SK-N-SH (cell line): ENCODE measurements at regions of chr19 and their contacts with region 1.

Region 1: DNA sequence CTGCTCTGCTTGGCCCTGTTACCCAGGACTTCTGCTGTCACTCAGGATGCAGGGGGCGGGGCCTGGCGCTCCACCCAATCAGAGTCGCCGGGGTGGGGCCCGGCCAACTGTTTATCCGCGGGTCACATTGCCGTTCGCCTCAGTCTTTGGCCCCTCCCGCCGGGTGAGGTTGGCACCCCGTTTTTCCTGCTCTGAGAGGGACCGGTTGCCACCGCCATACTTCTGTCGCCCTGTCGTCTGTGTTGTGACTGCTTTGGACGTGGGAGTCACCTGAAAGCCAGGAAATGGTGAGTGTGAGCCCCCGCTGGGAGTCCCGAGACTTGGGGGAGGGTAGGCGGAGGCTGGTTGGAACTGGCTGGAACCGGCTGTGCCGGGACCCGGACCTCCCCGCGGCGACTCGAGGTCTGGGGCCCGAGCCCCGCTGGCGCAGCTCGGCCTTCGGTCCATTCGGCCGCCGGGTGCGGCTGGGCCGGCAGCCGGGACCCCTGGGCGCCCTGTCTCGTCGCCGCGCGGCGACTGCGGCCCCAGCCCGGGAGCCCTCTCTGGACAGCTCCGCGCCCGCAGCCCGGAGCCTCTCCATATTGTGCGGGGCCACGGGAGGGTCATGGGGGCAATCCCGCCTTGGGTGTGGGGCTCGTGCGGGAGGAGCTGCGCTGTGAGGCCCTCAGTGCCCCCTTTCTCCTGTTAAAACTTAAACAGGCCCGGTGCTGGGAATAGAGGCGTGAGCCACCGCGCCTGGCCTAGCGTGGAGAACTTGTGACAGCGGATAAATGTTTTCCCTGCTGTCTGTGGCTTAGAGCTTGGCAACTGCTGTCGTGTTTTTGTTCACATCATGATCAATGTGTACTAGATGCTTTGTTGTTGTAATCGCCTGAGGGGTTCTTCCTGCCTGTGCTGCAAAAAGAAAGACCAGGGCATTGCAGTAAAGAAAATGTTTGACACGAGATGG is at the start of gene ZNF844:
- DNase-seq: peak; percentile 97
- H3K4me3 ChIP-seq: peak within 1 kb of the TSS; percentile 55 to 69
- H3K27ac ChIP-seq: peak within 1 kb of the TSS in 1 of 2 experiments; percentile 67; a peak in 1 of 4 replicates
- H3K4me1 ChIP-seq: no peaks in the 10 kb centered on the region; a peak in 1 of 4 replicates
- H3K27me3 ChIP-seq: no peaks in the 10 kb centered on the region
- CTCF ChIP-seq: no peak
- EP300 ChIP-seq: no peak
- RAD21 ChIP-seq: no peak
- polyA plus RNA-seq, gene ZNF844: 0.28 and 0.31 TPM in 2 replicates

Region 2: DNA sequence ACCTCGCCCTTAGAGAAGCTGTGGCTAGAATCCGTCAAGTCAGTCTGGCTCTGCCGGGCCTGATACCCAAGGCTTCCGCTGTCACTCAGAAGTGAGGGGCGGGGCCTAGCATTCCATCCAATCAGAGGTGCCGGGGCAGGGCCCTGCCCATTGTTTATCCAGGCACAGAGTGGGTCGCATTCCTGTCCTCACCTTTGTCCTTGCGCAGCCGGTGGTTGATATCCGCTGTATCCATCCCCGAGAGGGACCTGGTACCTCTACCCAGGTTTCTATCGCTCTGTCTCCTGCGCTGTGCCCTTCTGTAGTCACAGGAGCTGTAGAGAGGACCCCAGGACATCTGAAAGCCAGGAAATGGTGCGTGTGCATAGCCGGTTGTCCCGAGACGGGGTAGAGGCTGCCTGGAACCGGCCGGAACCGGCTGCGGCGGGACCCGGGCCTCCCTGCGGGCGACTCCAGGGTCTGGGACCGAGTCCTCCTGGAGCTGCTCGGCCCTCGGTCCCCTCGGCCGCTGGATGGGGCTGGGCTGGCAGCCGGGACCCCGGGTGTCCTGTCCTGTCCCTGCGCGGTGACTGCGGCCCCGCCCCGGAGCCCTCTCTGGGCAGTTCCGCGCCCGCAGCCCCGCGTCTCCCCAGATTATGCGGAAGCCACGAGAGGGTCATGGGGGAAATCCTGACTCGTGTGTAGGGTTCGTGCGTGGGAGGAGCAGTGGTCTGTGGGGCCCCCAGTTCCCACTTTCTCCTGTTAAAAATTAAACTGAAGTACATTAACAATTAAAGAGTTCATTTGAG is 99.8 kb before region 1 on chr19 and contains the start of gene ZNF763:
- CTCF ChIA-PET with region 1: interaction called, 11 read pairs
- POLR2A ChIA-PET with region 1: no interaction called
- DNase-seq: peak; percentile 92
- H3K4me3 ChIP-seq: peak within 1 kb of the TSS; percentile 65
- H3K27ac ChIP-seq: peak within 1 kb of the TSS; percentile 30 to 72
- H3K4me1 ChIP-seq: peaks cover 0 to 7% of the 10 kb centered on the region in 2 experiments; a peak in 1 of 4 replicates
- H3K27me3 ChIP-seq: no peaks in the 10 kb centered on the region
- CTCF ChIP-seq: no peak
- EP300 ChIP-seq: no peak
- RAD21 ChIP-seq: no peak
- polyA plus RNA-seq, gene ZNF763: 0.55 and 0.72 TPM in 2 replicates

Region 3: DNA sequence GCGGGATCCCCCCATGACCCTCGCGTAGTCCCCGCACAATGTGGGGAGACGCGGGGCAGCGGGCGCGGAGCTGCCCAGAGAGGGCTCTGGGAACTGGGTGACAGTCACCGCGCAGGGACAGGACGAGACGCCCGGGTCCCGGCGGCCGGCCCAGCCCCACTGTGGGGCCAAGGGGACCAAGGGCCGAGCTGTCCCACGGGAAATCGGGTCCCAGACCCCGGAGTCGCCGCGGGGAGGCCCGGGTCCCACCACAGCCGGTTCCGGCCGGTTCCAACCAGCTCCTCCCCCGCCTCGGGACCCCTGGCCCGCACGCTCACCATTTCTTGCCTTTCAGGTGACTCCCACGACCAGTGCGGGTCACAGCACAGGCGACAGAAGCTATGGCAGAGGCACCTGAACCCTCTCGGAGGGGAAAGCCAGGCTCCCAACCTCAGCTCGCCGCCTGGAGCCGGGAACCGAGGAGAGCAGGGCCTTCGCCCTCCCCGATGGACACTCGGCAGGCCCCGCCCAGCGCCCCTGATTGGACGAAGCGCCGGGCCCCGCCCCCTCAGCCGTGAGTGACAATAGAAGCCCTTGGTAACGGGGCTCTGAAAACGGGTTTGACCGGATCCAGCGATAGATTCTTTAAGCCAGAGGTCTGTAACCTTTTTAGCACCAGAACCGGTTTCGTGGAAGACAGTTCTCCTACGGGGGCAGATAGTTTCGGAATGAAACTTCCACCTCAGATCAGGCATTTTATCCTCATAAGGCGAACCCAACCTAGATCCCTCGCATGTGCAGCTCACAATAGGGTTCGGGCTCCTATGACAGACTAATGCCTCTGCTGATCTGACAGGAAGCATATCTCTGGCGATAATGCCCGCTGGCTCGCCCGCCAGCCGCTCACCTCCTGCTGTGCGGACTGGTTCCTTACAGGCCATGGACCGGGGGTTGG is 29.4 kb before region 1 on chr19 and contains the start of gene ZNF433:
- CTCF ChIA-PET with region 1: interaction called, 19 read pairs
- POLR2A ChIA-PET with region 1: interaction called, 8 read pairs
- DNase-seq: peak; percentile 97
- H3K4me3 ChIP-seq: peak within 1 kb of the TSS; percentile 62 to 86
- H3K27ac ChIP-seq: peak within 1 kb of the TSS; percentile 44 to 56; a peak in 3 of 4 replicates
- H3K4me1 ChIP-seq: peaks cover 0 to 3% of the 10 kb centered on the region in 2 experiments; a peak in 1 of 4 replicates
- H3K27me3 ChIP-seq: no peaks in the 10 kb centered on the region
- CTCF ChIP-seq: no peak
- EP300 ChIP-seq: no peak
- RAD21 ChIP-seq: 0 out of 2 replicates have a peak, but pooled peaks have one; percentile 7
- polyA plus RNA-seq, gene ZNF433: 1.9 and 2.1 TPM in 2 replicates

Region 4: DNA sequence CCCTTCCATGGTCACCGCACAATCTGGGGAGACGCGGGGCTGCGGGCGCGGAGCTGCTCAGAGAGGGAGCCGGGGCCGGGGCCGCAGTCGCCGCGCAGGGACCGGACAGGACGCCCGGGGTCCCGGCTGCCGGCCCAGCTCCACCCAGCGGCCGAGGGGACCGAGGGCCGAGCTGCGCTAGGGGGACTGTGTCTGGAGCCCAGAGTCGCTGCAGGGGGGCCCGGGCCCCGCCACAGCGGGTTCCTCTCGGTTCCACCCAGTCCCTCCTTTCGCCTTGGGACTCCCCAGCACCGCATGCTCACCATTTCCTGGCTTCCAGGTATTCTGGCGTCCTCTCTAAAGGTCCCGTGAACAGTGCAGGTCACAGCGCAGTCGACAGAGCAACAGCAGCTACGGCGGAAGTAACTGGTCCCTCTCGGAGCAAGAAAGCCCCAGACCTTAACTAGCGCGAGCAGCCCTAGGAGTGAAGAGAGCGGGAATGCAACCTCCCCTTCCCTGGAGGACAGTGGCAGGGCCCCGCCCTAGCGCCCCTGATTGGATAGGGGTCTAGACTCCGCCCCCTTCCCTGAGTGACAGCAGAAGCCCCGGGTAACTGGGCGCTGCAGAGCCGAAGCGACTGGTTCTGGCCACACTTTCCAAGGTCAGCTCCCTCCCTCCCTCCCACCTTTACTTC is 12.2 kb before region 1 on chr19 and contains the start of gene ZNF878:
- CTCF ChIA-PET with region 1: interaction called, 18 read pairs
- POLR2A ChIA-PET with region 1: interaction called, 5 read pairs
- DNase-seq: peak; percentile 96
- H3K4me3 ChIP-seq: peak within 1 kb of the TSS; percentile 58 to 69
- H3K27ac ChIP-seq: peak within 1 kb of the TSS in 1 of 2 experiments; percentile 66; a peak in 2 of 4 replicates
- H3K4me1 ChIP-seq: no peaks in the 10 kb centered on the region; a peak in 1 of 4 replicates
- H3K27me3 ChIP-seq: no peaks in the 10 kb centered on the region
- CTCF ChIP-seq: peak; percentile 33
- EP300 ChIP-seq: no peak
- RAD21 ChIP-seq: no peak
- polyA plus RNA-seq, gene ZNF878: 0.05 TPM in 1 of 2 replicates, not detected in the other

Region 5: DNA sequence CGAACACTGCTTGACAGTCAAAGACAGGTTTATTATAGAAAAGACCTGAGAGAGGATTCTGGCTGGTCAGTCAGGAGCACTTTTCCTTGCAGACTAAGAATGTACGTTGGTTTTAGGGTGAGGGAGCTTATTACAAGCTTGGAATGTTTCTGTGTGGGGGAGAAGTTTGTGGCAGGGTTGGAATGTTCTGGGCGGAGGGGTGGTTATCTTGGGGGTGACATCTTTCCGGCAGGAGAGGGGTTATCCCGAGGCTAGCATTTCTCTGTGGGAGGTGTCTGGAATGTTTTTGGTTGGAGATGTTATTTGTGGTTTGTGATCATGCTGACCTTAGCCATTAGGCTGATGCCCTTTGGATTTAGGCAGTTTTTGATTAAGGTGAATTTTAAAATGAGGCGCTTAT is 159.8 kb after region 1 on chr19:
- CTCF ChIA-PET with region 1: no interaction called
- POLR2A ChIA-PET with region 1: no interaction called
- DNase-seq: no peak
- H3K4me3 ChIP-seq: no peak overlapping the region
- H3K27ac ChIP-seq: no peak overlapping the region
- H3K4me1 ChIP-seq: no peaks in the 10 kb centered on the region
- H3K27me3 ChIP-seq: no peaks in the 10 kb centered on the region
- CTCF ChIP-seq: no peak
- EP300 ChIP-seq: no peak
- RAD21 ChIP-seq: no peak